CD8-positive, alpha-beta T cell (primary cell): ENCODE measurements at regions of chr22 and their contacts with region 1.

Region 1: GRCh38 chr22:50148991-50149721 is 21.4 kb upstream of the PANX2 start:
- DNase-seq: peak; percentile 59 to 87 (median 74)
- ATAC-seq: peak; percentile 99
- H3K4me3 ChIP-seq: no peak overlapping the region
- H3K4me3 Mint-ChIP-seq: no peak overlapping the region
- H3K27ac ChIP-seq: no peak overlapping the region
- H3K27ac Mint-ChIP-seq: no peak overlapping the region
- H3K4me1 ChIP-seq: no peaks in the 10 kb centered on the region
- H3K4me1 Mint-ChIP-seq: peaks cover 4% of the 10 kb centered on the region
- H3K27me3 ChIP-seq: no peaks in the 10 kb centered on the region
- H3K27me3 Mint-ChIP-seq: no peaks in the 10 kb centered on the region
- CTCF ChIP-seq: peak; percentile 82

Region 2: GRCh38 chr22:49767355-49768062 is 381.6 kb before region 1 on chr22:
- CTCF ChIA-PET with region 1: interaction called, 3 read pairs
- POLR2A ChIA-PET with region 1: no interaction called
- intact Hi-C with region 1: loop called in 1 of 2 experiments (anchors 10 kb)
- DNase-seq: peak in 3 of 9 experiments; percentile 62 to 71 (median 64)
- ATAC-seq: peak; percentile 24
- H3K4me3 ChIP-seq: no peak overlapping the region
- H3K4me3 Mint-ChIP-seq: no peak overlapping the region
- H3K27ac ChIP-seq: no peak overlapping the region
- H3K27ac Mint-ChIP-seq: peak overlapping the region; percentile 19
- H3K4me1 ChIP-seq: peaks cover 3% of the 10 kb centered on the region
- H3K4me1 Mint-ChIP-seq: peaks cover 12% of the 10 kb centered on the region
- H3K27me3 ChIP-seq: no peaks in the 10 kb centered on the region
- H3K27me3 Mint-ChIP-seq: no peaks in the 10 kb centered on the region
- CTCF ChIP-seq: peak; percentile 71

Region 3: DNA sequence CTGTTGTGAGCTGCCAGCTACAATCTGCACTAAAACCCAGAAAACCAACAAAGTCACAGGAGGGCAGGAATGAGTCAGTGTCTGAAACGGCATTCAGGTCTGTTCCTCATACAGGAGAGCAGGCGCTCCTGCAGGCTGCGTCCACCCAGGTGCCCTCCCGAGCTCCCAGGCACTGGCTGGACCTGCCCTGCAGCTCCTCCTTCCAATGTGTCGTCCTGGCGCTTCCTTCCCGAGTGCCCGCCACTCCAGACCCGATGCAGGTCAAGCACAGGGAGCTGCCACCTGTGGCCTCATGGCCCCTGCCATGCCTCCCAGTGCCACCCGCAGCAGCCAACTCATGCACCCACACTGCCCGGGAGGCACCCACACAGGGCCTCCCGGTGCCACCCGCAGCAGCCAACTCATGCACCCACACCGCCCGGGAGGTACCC is 333.5 kb before region 1 on chr22:
- CTCF ChIA-PET with region 1: no interaction called
- POLR2A ChIA-PET with region 1: no interaction called
- intact Hi-C with region 1: no loop called
- DNase-seq: no peak
- ATAC-seq: no peak
- H3K4me3 ChIP-seq: no peak overlapping the region
- H3K4me3 Mint-ChIP-seq: no peak overlapping the region
- H3K27ac ChIP-seq: no peak overlapping the region
- H3K27ac Mint-ChIP-seq: peak overlapping the region; percentile 22
- H3K4me1 ChIP-seq: peaks cover 47% of the 10 kb centered on the region
- H3K4me1 Mint-ChIP-seq: peaks cover 67% of the 10 kb centered on the region
- H3K27me3 ChIP-seq: no peaks in the 10 kb centered on the region
- H3K27me3 Mint-ChIP-seq: no peaks in the 10 kb centered on the region
- CTCF ChIP-seq: no peak

Region 4: GRCh38 chr22:49970528-49971231 is 178.5 kb before region 1 on chr22:
- CTCF ChIA-PET with region 1: no interaction called
- POLR2A ChIA-PET with region 1: no interaction called
- intact Hi-C with region 1: no loop called
- DNase-seq: peak; percentile 85 to 98 (median 94)
- ATAC-seq: peak; percentile 86
- H3K4me3 ChIP-seq: peak overlapping the region; percentile 34 to 55
- H3K4me3 Mint-ChIP-seq: peak overlapping the region; percentile 75
- H3K27ac ChIP-seq: peak overlapping the region; percentile 50 to 77
- H3K27ac Mint-ChIP-seq: peak overlapping the region; percentile 93
- H3K4me1 ChIP-seq: peaks cover 26% of the 10 kb centered on the region
- H3K4me1 Mint-ChIP-seq: peaks cover 24% of the 10 kb centered on the region
- H3K27me3 ChIP-seq: no peaks in the 10 kb centered on the region
- H3K27me3 Mint-ChIP-seq: no peaks in the 10 kb centered on the region
- CTCF ChIP-seq: no peak

Region 5: GRCh38 chr22:50190941-50191741 is 42.0 kb after region 1 on chr22:
- CTCF ChIA-PET with region 1: interaction called, 8 read pairs
- POLR2A ChIA-PET with region 1: interaction called, 3 read pairs
- intact Hi-C with region 1: loop called in 1 of 2 experiments (anchors 1 kb)
- DNase-seq: peak; percentile 70 to 96 (median 81)
- ATAC-seq: peak; percentile 61
- H3K4me3 ChIP-seq: peak overlapping the region; percentile 81 to 94
- H3K4me3 Mint-ChIP-seq: peak overlapping the region; percentile 80
- H3K27ac ChIP-seq: peak overlapping the region; percentile 94 to 99
- H3K27ac Mint-ChIP-seq: peak overlapping the region; percentile 95
- H3K4me1 ChIP-seq: peaks cover 61% of the 10 kb centered on the region
- H3K4me1 Mint-ChIP-seq: peaks cover 47% of the 10 kb centered on the region
- H3K27me3 ChIP-seq: no peaks in the 10 kb centered on the region
- H3K27me3 Mint-ChIP-seq: no peaks in the 10 kb centered on the region
- CTCF ChIP-seq: no peak

Region 6: GRCh38 chr22:50209893-50210292 is 60.7 kb after region 1 on chr22:
- CTCF ChIA-PET with region 1: interaction called, 47 read pairs
- POLR2A ChIA-PET with region 1: interaction called, 3 read pairs
- intact Hi-C with region 1: loop called in 1 of 2 experiments (anchors 1 kb)
- DNase-seq: peak; percentile 49 to 84 (median 72)
- ATAC-seq: peak; percentile 86
- H3K4me3 ChIP-seq: no peak overlapping the region
- H3K4me3 Mint-ChIP-seq: no peak overlapping the region
- H3K27ac ChIP-seq: no peak overlapping the region
- H3K27ac Mint-ChIP-seq: peak overlapping the region; percentile 88
- H3K4me1 ChIP-seq: peaks cover 7% of the 10 kb centered on the region
- H3K4me1 Mint-ChIP-seq: peaks cover 33% of the 10 kb centered on the region
- H3K27me3 ChIP-seq: no peaks in the 10 kb centered on the region
- H3K27me3 Mint-ChIP-seq: no peaks in the 10 kb centered on the region
- CTCF ChIP-seq: peak; percentile 85

Region 7: DNA sequence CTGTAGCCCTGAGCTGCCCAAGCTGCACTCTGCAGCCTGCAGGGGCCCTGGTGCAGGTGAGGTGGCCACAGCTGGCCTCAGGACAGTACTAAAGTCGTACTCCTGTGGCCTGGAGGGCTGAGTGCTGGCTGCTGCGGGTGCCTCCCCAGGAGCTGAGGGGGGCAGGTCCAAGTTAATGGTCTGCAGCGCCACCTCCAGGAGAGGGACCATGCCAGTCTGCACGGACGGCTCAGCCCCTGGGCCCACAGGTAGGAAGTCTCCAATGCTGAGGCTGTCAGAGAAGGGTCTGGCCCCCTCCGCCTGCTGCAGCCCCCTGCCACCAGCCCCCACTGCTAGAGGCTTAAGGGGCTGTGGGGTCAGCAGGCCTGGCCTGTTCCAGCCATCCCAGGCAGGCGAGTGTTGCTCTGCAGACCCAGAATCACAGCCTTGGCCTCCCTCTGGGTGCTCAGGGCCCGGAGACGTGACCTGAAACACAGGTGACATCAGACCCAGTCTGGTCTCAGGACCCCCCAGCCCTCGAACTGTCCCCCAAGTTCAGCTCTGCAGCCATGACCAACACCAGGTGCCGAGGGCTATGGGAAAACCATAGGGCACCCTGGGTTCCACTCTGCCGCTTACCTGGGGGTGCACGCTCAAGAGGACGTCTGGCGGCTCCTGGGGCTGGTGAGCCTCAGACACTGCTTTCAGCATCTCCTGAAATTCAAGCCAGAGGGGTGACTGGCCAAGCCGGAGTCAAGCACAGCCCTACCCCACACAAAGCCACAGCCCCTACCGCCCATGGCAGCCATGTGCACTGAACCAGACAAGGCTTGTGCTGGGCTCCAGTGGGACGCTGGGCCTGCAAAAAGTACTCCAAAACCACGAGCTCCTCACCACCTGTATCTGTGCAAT is 72.5 kb after region 1 on chr22:
- CTCF ChIA-PET with region 1: interaction called, 14 read pairs
- POLR2A ChIA-PET with region 1: no interaction called
- intact Hi-C with region 1: no loop called
- DNase-seq: peak in 2 of 9 experiments; percentile 22 to 31
- ATAC-seq: no peak
- H3K4me3 ChIP-seq: no peak overlapping the region
- H3K4me3 Mint-ChIP-seq: no peak overlapping the region
- H3K27ac ChIP-seq: no peak overlapping the region
- H3K27ac Mint-ChIP-seq: no peak overlapping the region
- H3K4me1 ChIP-seq: no peaks in the 10 kb centered on the region
- H3K4me1 Mint-ChIP-seq: no peaks in the 10 kb centered on the region
- H3K27me3 ChIP-seq: no peaks in the 10 kb centered on the region
- H3K27me3 Mint-ChIP-seq: no peaks in the 10 kb centered on the region
- CTCF ChIP-seq: no peak

Region 8: GRCh38 chr22:50326959-50327710 is 178.0 kb after region 1 on chr22 and contains the start of gene DENND6B:
- CTCF ChIA-PET with region 1: no interaction called
- POLR2A ChIA-PET with region 1: no interaction called
- intact Hi-C with region 1: loop called in 1 of 2 experiments (anchors 5 kb)
- DNase-seq: peak; percentile 34 to 85 (median 64)
- ATAC-seq: peak; percentile 94
- H3K4me3 ChIP-seq: peak within 1 kb of the TSS; percentile 45 to 69
- H3K4me3 Mint-ChIP-seq: peak within 1 kb of the TSS; percentile 83
- H3K27ac ChIP-seq: peak within 1 kb of the TSS; percentile 23 to 37
- H3K27ac Mint-ChIP-seq: peak within 1 kb of the TSS; percentile 84
- H3K4me1 ChIP-seq: peaks cover 10% of the 10 kb centered on the region
- H3K4me1 Mint-ChIP-seq: peaks cover 12% of the 10 kb centered on the region
- H3K27me3 ChIP-seq: no peaks in the 10 kb centered on the region
- H3K27me3 Mint-ChIP-seq: peaks cover 2% of the 10 kb centered on the region
- CTCF ChIP-seq: peak; percentile 65
- total RNA-seq, gene DENND6B: 3.0 to 3.1 TPM

Region 9: DNA sequence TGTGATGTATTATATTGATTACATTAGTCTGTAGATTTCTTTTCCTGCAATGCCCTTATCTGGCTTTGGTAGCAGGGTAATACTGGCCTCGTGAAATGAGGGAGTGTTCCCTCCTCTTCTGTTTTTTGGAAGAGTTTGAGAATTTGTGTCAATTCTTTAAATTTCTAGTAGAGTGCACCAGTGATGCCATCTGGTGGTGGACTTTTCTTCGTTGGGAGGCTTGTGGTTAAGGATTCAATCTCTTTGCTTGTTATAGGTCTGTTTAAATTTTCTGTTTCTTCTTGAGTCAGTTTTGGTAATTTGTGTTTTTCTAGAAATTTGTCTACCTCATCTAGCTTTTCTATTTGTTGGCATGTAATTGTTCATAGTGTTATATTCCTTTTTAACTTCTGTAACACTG is 542.4 kb after region 1 on chr22:
- CTCF ChIA-PET with region 1: no interaction called
- POLR2A ChIA-PET with region 1: no interaction called
- intact Hi-C with region 1: loop called in 1 of 2 experiments (anchors 5 kb)
- DNase-seq: peak in 4 of 9 experiments; percentile 27 to 63 (median 42)
- ATAC-seq: no peak
- H3K4me3 ChIP-seq: no peak overlapping the region
- H3K4me3 Mint-ChIP-seq: no peak overlapping the region
- H3K27ac ChIP-seq: no peak overlapping the region
- H3K27ac Mint-ChIP-seq: no peak overlapping the region
- H3K4me1 ChIP-seq: no peaks in the 10 kb centered on the region
- H3K4me1 Mint-ChIP-seq: no peaks in the 10 kb centered on the region
- H3K27me3 ChIP-seq: peaks cover 0 to 2% of the 10 kb centered on the region in 2 experiments
- H3K27me3 Mint-ChIP-seq: peaks cover 4% of the 10 kb centered on the region
- CTCF ChIP-seq: peak; percentile 42